PC-9 (cell line): ENCODE measurements at regions of chr17 and their contacts with region 1.

Region 1: DNA sequence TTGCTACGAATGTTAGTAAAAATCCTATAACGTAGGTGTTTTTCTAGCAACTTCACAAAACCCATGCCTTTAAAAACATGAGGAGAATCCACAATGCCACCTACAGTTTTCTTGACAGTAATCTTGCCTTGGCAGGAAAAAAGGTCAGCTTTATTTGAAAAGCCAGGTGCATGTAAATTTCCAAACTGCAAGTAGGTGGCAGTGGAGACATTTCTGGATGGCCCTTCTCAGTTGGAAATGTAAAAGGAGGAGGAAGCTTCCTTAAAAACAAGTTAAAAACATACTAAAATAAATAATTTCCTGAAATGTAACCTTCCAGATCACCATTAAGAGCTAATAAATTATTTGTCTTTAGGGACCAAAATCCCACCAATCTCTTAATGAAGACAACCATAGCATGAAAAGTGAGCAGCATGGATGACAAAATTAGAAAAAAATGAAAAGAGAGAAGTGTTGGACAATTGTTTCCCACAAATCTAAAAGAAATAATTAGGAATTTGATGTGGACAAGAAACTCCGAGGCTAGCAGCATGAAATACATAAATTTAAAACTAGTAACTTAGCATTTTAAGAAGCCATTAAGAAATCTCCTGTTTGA is 152.2 kb downstream of the SNX11 start:
- DNase-seq: peak in 1 of 2 experiments; percentile 55
- H3K4me3 ChIP-seq: no peak overlapping the region
- H3K27ac ChIP-seq: no peak overlapping the region
- H3K4me1 ChIP-seq: peaks cover 7% of the 10 kb centered on the region
- H3K27me3 ChIP-seq: no peaks in the 10 kb centered on the region
- CTCF ChIP-seq: peak; percentile 87

Region 2: GRCh38 chr17:48215583-48216139 is 44.1 kb before region 1 on chr17:
- CTCF ChIA-PET with region 1: interaction called, 21 read pairs
- POLR2A ChIA-PET with region 1: no interaction called
- intact Hi-C with region 1: loop called (anchors 1 kb)
- DNase-seq: peak; percentile 40 to 52
- H3K4me3 ChIP-seq: no peak overlapping the region
- H3K27ac ChIP-seq: no peak overlapping the region
- H3K4me1 ChIP-seq: no peaks in the 10 kb centered on the region
- H3K27me3 ChIP-seq: no peaks in the 10 kb centered on the region
- CTCF ChIP-seq: peak; percentile 88

Region 3: GRCh38 chr17:48225725-48226567 is 33.8 kb before region 1 on chr17:
- CTCF ChIA-PET with region 1: no interaction called
- POLR2A ChIA-PET with region 1: no interaction called
- intact Hi-C with region 1: no loop called
- DNase-seq: no peak
- H3K4me3 ChIP-seq: no peak overlapping the region
- H3K27ac ChIP-seq: no peak overlapping the region
- H3K4me1 ChIP-seq: 0 out of 2 replicates have a peak, but pooled peaks cover 3% of the 10 kb centered on the region
- H3K27me3 ChIP-seq: no peaks in the 10 kb centered on the region
- CTCF ChIP-seq: no peak

Region 4: GRCh38 chr17:48335858-48336500 is 76.2 kb after region 1 on chr17:
- CTCF ChIA-PET with region 1: interaction called, 4 read pairs
- POLR2A ChIA-PET with region 1: no interaction called
- intact Hi-C with region 1: loop called (anchors 5 kb)
- DNase-seq: peak in 1 of 2 experiments; percentile 49
- H3K4me3 ChIP-seq: no peak overlapping the region
- H3K27ac ChIP-seq: no peak overlapping the region
- H3K4me1 ChIP-seq: peaks cover 28% of the 10 kb centered on the region
- H3K27me3 ChIP-seq: no peaks in the 10 kb centered on the region
- CTCF ChIP-seq: peak; percentile 93

Region 5: DNA sequence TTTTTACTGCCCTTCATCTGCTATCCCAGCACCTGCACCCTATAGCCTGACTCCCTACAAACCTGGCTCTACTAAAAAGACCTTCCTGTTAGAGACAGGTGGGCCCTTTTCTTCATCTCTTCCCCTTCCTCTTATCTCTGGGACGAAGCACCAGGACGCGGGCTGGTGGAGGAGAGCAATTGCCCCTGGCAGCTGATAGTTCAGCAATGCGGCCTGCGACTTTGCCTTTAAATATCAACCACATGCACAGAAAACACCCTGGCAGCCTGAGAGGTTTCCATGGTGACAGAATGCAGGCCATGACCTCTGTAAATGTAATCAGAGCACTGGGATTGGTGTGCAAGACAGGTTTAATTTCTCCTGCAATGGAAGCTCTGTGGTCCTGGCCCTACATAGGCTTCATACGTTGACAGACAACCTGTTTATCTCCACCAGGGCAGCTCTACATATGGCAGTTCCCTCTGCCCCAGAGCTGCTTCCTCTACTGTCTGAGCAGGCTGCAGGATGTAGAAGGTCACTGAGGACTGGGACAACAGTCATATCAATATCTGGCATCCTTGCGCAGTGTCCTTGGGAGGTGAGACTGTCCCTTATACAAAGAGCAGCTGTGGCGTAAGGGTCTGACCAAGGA is 180.2 kb after region 1 on chr17:
- CTCF ChIA-PET with region 1: no interaction called
- POLR2A ChIA-PET with region 1: no interaction called
- intact Hi-C with region 1: no loop called
- DNase-seq: no peak
- H3K4me3 ChIP-seq: no peak overlapping the region
- H3K27ac ChIP-seq: no peak overlapping the region
- H3K4me1 ChIP-seq: no peaks in the 10 kb centered on the region
- H3K27me3 ChIP-seq: no peaks in the 10 kb centered on the region
- CTCF ChIP-seq: no peak

Region 6: DNA sequence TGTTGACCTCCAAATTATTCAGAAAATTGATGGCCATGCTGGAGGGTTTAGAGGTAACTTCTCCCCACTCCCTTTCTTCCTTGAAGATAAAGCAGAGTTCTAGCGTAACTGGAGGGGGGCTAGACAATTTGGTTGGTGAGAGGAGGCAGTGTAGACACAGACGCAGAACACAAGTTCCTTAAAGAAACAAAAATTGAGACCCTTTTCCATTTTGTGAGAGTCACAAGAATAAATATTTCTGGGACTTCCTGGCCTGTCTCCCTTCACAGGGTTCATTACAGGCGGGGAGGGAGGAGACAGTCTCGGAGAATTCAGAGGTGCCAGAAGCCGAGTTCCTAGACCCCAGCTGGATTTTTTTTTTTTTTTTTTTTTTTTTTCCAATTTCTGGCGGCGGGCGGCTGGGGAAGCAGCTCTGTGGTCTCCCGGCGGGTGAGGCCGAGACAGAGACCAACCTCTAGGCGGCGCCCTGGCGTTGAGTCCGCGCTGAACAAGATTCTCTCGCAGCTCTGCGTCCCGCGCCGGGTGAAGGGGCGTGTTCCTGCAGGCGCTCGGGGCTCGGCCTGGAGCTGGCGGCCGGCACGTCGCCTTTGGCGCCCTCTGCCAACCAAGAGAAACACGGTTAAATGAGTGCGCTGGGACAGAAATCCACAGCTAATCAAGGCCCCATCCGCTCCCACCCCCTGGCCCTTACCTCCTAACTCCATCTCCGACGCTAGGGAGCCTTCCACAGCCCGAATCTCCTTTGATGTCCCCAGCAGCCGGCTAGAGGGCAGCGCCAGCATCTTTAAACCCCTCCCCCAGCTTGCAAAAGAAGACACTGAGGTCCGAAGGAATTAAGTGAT is 376.6 kb after region 1 on chr17:
- CTCF ChIA-PET with region 1: interaction called, 11 read pairs
- POLR2A ChIA-PET with region 1: no interaction called
- intact Hi-C with region 1: no loop called
- DNase-seq: peak; percentile 59 to 87
- H3K4me3 ChIP-seq: no peak overlapping the region
- H3K27ac ChIP-seq: no peak overlapping the region
- H3K4me1 ChIP-seq: no peaks in the 10 kb centered on the region
- H3K27me3 ChIP-seq: peaks cover 74% of the 10 kb centered on the region
- CTCF ChIP-seq: peak; percentile 65